ENCODE measurements at regions of chr3 and their contacts with region 1.

Region 1: GRCh38 chr3:157088601-157089454 is 71.1 kb downstream of the CCNL1 start:
- DNase-seq: peak; percentile 69
- H3K4me3 ChIP-seq: peak overlapping the region; percentile 54
- H3K27me3 ChIP-seq: no peaks in the 10 kb centered on the region
- CTCF ChIP-seq: peak; percentile 25; the same call in 1 of the 2 replicates

Region 2: DNA sequence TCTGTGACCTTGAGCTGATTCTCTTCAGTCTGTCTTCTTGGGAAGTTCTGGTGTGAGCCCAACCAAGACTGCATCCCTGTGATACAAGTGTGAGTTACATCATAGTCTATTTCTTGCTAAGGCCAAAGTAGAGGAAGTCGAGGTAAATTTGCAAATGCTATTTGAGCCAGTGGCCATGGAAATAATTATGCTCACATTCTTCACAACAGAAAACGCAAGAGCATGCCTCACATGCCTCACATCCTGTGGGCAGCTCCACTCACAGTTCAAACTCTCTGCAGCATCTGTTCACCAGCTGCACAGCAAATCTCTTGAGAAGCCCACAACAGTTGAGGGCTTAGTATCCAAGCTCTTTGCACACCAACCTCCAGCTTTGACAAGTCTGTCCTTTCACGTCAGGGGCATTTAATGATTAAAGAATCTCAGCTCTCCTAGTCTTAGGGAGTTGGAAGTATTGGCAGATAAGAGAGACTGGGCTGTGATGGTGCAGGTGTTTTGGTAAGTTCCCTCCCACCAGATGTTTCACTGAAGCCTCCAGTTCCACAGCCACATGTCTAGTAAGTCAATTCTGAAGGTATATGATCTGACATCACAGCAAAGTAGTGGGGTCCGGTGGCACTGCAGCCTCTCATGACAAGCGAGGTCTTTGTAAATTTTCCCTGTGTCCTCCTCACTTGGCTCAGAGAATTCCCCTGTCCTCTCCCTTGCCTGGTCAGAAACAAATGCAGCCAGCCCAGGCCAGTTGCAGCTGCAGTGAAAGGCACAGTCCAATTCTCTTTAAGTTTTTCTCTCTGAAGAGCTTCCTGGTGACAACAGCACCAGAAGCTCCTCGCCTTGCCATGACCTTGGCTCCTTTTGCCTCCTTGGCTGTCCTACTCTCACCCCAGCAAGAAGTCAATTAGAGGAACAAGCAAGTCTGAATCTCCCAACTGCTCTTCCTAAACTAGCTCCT is 700.1 kb before region 1 on chr3:
- CTCF ChIA-PET with region 1: no interaction called
- POLR2A ChIA-PET with region 1: interaction called, 10 read pairs
- DNase-seq: peak; percentile 99
- H3K4me3 ChIP-seq: no peak overlapping the region
- H3K27me3 ChIP-seq: no peaks in the 10 kb centered on the region; the same call in 1 of the 2 replicates
- CTCF ChIP-seq: no peak